ENCODE measurements at regions of chr19 and their contacts with region 1.

Region 1: GRCh38 chr19:49916842-49917733 is 11.9 kb upstream of the ATF5 start:
- DNase-seq: no peak
- ATAC-seq: peak; percentile 67
- H3K4me3 ChIP-seq: no peak overlapping the region
- H3K4me3 Mint-ChIP-seq: peak overlapping the region; percentile 88
- H3K27ac ChIP-seq: peak overlapping the region; percentile 34 to 50
- H3K27ac Mint-ChIP-seq: peak overlapping the region; percentile 95
- H3K4me1 ChIP-seq: peaks cover 0 to 6% of the 10 kb centered on the region in 2 donors
- H3K4me1 Mint-ChIP-seq: peaks cover 54% of the 10 kb centered on the region
- H3K27me3 ChIP-seq: no peaks in the 10 kb centered on the region
- H3K27me3 Mint-ChIP-seq: no peaks in the 10 kb centered on the region
- CTCF ChIP-seq: peak; percentile 47

Region 2: DNA sequence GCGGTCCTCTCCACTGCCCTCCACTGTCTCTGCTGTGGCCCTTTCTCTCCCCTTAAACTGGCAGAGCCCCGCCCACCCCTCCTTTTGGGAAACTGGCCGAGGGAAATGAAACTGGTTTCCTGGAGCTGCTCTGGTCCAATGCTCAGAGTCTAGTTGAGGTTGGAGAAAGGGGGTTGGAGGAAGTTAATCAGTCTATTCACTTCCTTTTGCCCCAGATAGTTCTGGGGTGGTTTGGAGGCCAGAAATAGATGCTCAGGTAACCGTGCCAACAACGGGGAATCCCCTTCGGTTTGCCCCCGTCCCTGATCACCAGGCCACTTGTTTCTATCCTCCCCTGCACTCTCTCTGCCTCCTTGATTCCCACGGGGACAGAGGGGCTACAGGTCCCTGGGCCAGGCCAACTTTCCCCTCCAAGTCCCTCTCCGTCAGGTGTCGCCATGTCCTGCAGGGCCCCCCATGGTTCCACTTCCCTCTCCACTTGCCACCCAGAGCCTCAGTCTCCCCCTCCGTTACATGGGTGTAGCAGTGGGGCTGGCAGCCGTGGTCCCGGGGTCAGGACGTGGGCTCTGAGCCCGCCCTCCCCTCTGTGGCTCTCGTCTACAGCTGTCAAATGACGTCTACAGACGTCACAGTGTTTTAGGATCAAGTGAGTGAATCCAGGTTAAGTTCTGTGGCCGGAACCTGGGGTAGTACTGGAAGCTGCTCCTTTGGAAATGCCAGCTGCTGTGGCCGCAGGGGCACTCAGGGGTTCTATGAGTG is 20.0 kb before region 1 on chr19 and contains the start of gene IL4I1:
- CTCF ChIA-PET with region 1: interaction called, 17 read pairs
- POLR2A ChIA-PET with region 1: interaction called, 20 read pairs
- intact Hi-C with region 1: no loop called
- DNase-seq: peak; percentile 91
- ATAC-seq: peak; percentile 74
- H3K4me3 ChIP-seq: peak within 1 kb of the TSS; percentile 34 to 60 (median 44)
- H3K4me3 Mint-ChIP-seq: peak within 1 kb of the TSS; percentile 89
- H3K27ac ChIP-seq: peak within 1 kb of the TSS; percentile 82 to 84
- H3K27ac Mint-ChIP-seq: peak within 1 kb of the TSS; percentile 97
- H3K4me1 ChIP-seq: peaks cover 30 to 39% of the 10 kb centered on the region in 2 donors
- H3K4me1 Mint-ChIP-seq: peaks cover 40% of the 10 kb centered on the region
- H3K27me3 ChIP-seq: no peaks in the 10 kb centered on the region
- H3K27me3 Mint-ChIP-seq: no peaks in the 10 kb centered on the region
- CTCF ChIP-seq: no peak
- total RNA-seq, gene IL4I1: 3.1 and 3.9 TPM in 2 replicates

Measured in B cell (primary cell).